Heart right ventricle (tissue), 16 donors: ENCODE measurements at regions of chr2 and their contacts with region 1.

Region 1: GRCh38 chr2:24421668-24422067 is 61.3 kb upstream of the ITSN2 start:
- DNase-seq: peak in 1 of 2 donors; percentile 75
- ATAC-seq: peak in 7 of 8 donors; percentile 58 to 90 (median 83)
- H3K4me3 ChIP-seq: no peak overlapping the region
- H3K27ac ChIP-seq: no peak overlapping the region
- H3K4me1 ChIP-seq: peaks cover 0 to 5% (median 0%) of the 10 kb centered on the region in 9 donors
- H3K27me3 ChIP-seq: no peaks in the 10 kb centered on the region
- CTCF ChIP-seq: peak; percentile 28 to 78 (median 66)

Region 2: DNA sequence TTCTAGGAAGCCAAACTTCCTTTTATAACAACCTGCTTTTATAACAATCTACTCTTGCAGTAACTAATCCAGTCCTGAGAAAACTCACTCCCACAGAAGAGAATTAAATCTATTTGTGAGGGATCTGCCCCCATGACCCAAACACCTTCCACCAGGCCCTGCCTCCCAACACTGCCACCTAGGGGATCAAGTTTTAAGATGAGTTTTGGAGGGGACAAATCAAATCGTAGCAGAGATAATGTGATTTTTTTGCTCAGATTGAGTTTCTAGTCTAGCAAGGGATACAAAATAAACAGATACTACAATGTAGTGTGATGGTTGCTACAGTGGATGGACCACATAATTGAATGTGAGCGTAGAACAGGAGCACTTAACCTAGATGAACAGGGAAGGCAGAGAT is 121.6 kb after region 1 on chr2:
- intact Hi-C with region 1: loop called in 1 of 10 experiments (anchors 5 kb)
- DNase-seq: no peak
- ATAC-seq: no peak
- H3K4me3 ChIP-seq: no peak overlapping the region
- H3K27ac ChIP-seq: no peak overlapping the region
- H3K4me1 ChIP-seq: peaks cover 0 to 28% (median 0%) of the 10 kb centered on the region in 9 donors
- H3K27me3 ChIP-seq: no peaks in the 10 kb centered on the region
- CTCF ChIP-seq: peak in 5 of 9 donors; percentile 12 to 35 (median 22)

Region 3: GRCh38 chr2:24708537-24709152 is 287.0 kb after region 1 on chr2:
- intact Hi-C with region 1: no loop called
- DNase-seq: no peak
- ATAC-seq: no peak
- H3K4me3 ChIP-seq: no peak overlapping the region
- H3K27ac ChIP-seq: no peak overlapping the region
- H3K4me1 ChIP-seq: peaks cover 0 to 31% (median 0%) of the 10 kb centered on the region in 9 donors
- H3K27me3 ChIP-seq: no peaks in the 10 kb centered on the region
- CTCF ChIP-seq: no peak

Region 4: GRCh38 chr2:24721470-24721869 is 299.8 kb after region 1 on chr2:
- intact Hi-C with region 1: loop called in 3 of 10 experiments (anchors 10 kb)
- DNase-seq: peak; percentile 52 to 90
- ATAC-seq: peak; percentile 89 to 99 (median 96)
- H3K4me3 ChIP-seq: no peak overlapping the region
- H3K27ac ChIP-seq: peak overlapping the region in 8 of 10 donors; percentile 0 to 57 (median 34)
- H3K4me1 ChIP-seq: peaks cover 0 to 33% (median 23%) of the 10 kb centered on the region in 9 donors
- H3K27me3 ChIP-seq: no peaks in the 10 kb centered on the region
- CTCF ChIP-seq: peak in 1 of 9 donors; percentile 5

Region 5: DNA sequence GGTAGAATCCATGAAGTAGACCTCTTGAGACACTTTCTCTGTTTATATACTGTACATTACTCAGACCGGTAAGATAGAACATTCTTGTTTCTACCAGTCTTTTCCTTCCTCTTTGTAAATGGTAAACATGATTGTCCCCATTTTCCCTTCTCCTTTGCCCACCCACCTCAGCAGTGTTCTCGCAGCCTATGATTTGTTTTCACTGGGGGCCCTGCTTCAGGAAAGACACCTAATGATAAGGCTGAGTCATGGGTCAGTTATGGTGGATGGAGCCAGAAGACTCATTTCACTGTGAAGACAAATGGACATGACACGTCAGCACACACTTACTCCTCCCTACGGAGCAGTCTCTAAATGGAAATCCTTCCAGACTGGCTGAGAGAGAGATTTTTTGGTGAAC is 395.2 kb after region 1 on chr2:
- intact Hi-C with region 1: loop called in 1 of 10 experiments (anchors 5 kb)
- DNase-seq: no peak
- ATAC-seq: no peak
- H3K4me3 ChIP-seq: no peak overlapping the region
- H3K27ac ChIP-seq: no peak overlapping the region
- H3K4me1 ChIP-seq: peaks cover 0 to 14% (median 0%) of the 10 kb centered on the region in 9 donors
- H3K27me3 ChIP-seq: no peaks in the 10 kb centered on the region
- CTCF ChIP-seq: no peak

Region 6: DNA sequence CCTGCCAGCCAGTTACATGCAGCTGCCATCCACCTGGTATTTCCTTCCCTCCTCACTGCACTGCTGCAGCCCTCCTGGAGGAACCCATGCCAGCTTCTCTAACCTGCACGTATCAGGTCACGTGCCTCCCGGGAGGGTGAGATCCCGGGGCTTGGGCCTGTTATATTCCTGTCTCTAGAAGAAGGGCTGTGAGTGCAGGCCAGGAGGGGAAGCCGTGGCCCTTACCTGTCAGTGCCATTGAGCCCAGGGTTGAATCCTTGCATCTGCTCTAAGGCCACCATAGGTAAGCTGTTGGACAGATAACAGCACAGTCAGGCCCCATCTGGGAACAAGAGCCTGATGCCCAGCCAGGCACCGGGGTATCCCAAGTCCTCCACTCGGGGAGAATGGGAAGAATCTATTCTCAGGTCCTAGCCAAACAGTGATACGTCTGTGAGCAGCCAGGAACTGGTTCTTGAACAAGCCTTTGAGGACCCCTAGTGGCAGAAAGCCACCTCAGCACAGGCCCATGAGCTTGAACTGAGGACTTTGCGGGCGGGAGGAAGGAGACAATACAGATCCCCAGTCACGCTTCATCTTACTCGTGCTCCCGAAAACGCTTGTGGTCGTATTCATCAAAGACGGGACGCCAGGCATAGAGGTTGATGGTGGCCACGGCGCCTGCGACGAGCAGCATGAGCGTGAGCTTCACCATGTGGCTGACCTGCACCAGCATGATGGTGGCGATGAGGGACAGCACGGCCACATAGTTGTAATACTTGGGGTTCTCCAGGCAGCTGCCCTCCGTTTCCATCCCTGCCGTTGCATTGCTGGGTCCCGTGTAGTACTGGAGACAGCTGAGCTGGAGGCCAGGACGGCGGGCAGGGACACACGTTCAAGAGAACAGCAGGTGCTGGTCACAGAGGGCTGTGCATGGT is 405.9 kb after region 1 on chr2:
- intact Hi-C with region 1: loop called in 2 of 10 experiments (anchors 5 kb)
- DNase-seq: peak; percentile 68 to 86
- ATAC-seq: peak; percentile 89 to 97 (median 92)
- H3K4me3 ChIP-seq: no peak overlapping the region
- H3K27ac ChIP-seq: peak overlapping the region in 2 of 10 donors; percentile 8 to 26
- H3K4me1 ChIP-seq: peaks cover 4 to 22% (median 14%) of the 10 kb centered on the region in 9 donors
- H3K27me3 ChIP-seq: no peaks in the 10 kb centered on the region
- CTCF ChIP-seq: peak; percentile 81 to 96 (median 90)